CD8-positive, alpha-beta memory T cell (primary cell): ENCODE measurements at regions of chr20 and their contacts with region 1.

Region 1: DNA sequence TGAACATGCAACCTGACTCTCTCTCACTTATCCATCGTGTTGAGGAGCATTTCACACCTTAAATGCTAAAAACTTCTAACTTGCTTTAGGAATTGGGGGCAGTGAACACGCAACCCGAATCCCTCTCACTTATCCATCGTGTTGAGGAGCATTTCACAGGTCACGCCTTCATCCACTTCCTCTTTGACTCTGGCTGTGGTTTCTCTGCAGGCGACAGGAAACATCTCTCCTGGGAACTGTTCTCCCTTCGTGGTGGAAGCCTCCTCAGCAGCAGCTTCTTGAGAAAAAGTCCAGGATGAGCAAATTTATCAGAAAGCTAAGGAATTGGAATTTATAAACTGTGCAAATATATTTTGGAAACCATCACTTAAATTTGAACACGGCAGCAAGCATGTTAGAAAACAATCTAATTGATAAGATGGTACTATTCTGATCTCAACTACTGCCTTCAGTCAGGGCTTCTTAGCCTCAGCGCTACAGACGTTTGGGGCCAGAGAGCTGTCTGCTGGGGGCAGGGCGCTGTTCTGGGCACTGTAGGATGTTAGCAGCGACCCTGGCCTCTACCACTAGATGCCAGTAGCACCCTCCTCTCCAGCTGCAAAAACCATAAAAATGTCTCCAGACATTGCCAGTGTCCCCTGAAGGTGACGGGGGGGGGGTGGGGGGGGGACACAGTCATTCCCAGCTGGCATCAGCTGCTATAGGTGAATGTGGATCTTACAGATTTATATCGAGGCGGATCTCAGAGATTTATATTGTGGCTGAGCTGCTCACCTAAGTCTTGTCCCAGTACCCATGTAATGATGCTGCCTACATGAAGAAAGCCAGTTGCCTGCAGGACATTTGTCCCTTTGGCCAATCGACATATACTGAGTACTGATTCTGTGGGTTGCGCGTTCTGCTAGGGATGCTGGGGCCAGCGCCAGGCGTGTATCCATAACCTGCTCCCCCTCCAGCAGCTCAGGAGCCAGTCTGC is 26.2 kb downstream of the CTCFL start:
- DNase-seq: peak in 1 of 5 donors; percentile 26
- H3K4me3 ChIP-seq: no peak overlapping the region
- H3K4me3 Mint-ChIP-seq: no peak overlapping the region
- H3K27ac ChIP-seq: no peak overlapping the region
- H3K27ac Mint-ChIP-seq: peak overlapping the region in 1 of 8 donors; percentile 14
- H3K4me1 ChIP-seq: peaks cover 11% of the 10 kb centered on the region
- H3K4me1 Mint-ChIP-seq: peaks cover 8 to 14% (median 13%) of the 10 kb centered on the region in 3 donors
- H3K27me3 ChIP-seq: peaks cover 6% of the 10 kb centered on the region
- H3K27me3 Mint-ChIP-seq: peaks cover 32 to 60% of the 10 kb centered on the region in 2 donors

Region 2: GRCh38 chr20:57175397-57176010 is 323.2 kb before region 1 on chr20:
- CTCF ChIA-PET with region 1: no interaction called
- POLR2A ChIA-PET with region 1: no interaction called
- DNase-seq: no peak
- H3K4me3 ChIP-seq: no peak overlapping the region
- H3K4me3 Mint-ChIP-seq: no peak overlapping the region
- H3K27ac ChIP-seq: no peak overlapping the region
- H3K27ac Mint-ChIP-seq: no peak overlapping the region
- H3K4me1 ChIP-seq: no peaks in the 10 kb centered on the region
- H3K4me1 Mint-ChIP-seq: no peaks in the 10 kb centered on the region
- H3K27me3 ChIP-seq: no peaks in the 10 kb centered on the region
- H3K27me3 Mint-ChIP-seq: peaks cover 10 to 19% of the 10 kb centered on the region in 2 donors

Region 3: GRCh38 chr20:57382027-57382503 is 116.6 kb before region 1 on chr20:
- CTCF ChIA-PET with region 1: interaction called, 16 read pairs
- POLR2A ChIA-PET with region 1: no interaction called
- DNase-seq: no peak
- H3K4me3 ChIP-seq: no peak overlapping the region
- H3K4me3 Mint-ChIP-seq: peak overlapping the region in 1 of 7 donors; percentile 62
- H3K27ac ChIP-seq: no peak overlapping the region
- H3K27ac Mint-ChIP-seq: peak overlapping the region; percentile 31 to 83 (median 61)
- H3K4me1 ChIP-seq: peaks cover 11% of the 10 kb centered on the region
- H3K4me1 Mint-ChIP-seq: peaks cover 24 to 44% (median 38%) of the 10 kb centered on the region in 3 donors
- H3K27me3 ChIP-seq: no peaks in the 10 kb centered on the region
- H3K27me3 Mint-ChIP-seq: no peaks in the 10 kb centered on the region

Region 4: GRCh38 chr20:57450419-57450818 is 48.3 kb before region 1 on chr20:
- CTCF ChIA-PET with region 1: no interaction called
- POLR2A ChIA-PET with region 1: no interaction called
- DNase-seq: no peak
- H3K4me3 ChIP-seq: no peak overlapping the region
- H3K4me3 Mint-ChIP-seq: peak overlapping the region in 4 of 7 donors; percentile 41 to 71 (median 51)
- H3K27ac ChIP-seq: no peak overlapping the region
- H3K27ac Mint-ChIP-seq: peak overlapping the region in 7 of 8 donors; percentile 20 to 92 (median 45)
- H3K4me1 ChIP-seq: peaks cover 35% of the 10 kb centered on the region
- H3K4me1 Mint-ChIP-seq: peaks cover 30 to 33% (median 33%) of the 10 kb centered on the region in 3 donors
- H3K27me3 ChIP-seq: no peaks in the 10 kb centered on the region
- H3K27me3 Mint-ChIP-seq: peaks cover 0 to 4% of the 10 kb centered on the region in 2 donors

Region 5: DNA sequence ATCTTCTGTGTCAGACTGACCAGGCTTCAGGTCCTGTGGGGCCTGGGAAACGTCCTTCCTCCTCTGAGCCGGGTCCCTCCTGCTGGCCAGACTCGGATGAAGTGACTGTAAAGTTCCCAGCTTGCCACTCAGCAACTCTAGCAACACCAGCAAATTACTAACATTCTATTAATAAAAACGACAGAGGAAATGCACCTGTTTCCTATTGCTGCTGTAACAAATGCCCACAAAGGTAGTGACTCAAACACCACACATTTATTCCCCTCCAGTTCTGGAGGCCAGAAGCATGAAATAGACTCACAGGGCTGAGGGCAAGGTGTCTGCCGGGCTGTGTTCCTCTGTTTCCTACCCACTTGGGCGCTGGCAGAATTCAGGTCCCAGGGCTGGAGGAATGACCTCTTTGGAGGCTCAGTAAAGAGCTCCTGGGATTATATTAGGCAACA is 22.6 kb before region 1 on chr20:
- CTCF ChIA-PET with region 1: no interaction called
- POLR2A ChIA-PET with region 1: no interaction called
- DNase-seq: no peak
- H3K4me3 ChIP-seq: no peak overlapping the region
- H3K4me3 Mint-ChIP-seq: no peak overlapping the region
- H3K27ac ChIP-seq: no peak overlapping the region
- H3K27ac Mint-ChIP-seq: peak overlapping the region in 1 of 8 donors; percentile 43
- H3K4me1 ChIP-seq: peaks cover 34% of the 10 kb centered on the region
- H3K4me1 Mint-ChIP-seq: peaks cover 16 to 38% (median 19%) of the 10 kb centered on the region in 3 donors
- H3K27me3 ChIP-seq: no peaks in the 10 kb centered on the region
- H3K27me3 Mint-ChIP-seq: peaks cover 3 to 11% of the 10 kb centered on the region in 2 donors

Region 6: DNA sequence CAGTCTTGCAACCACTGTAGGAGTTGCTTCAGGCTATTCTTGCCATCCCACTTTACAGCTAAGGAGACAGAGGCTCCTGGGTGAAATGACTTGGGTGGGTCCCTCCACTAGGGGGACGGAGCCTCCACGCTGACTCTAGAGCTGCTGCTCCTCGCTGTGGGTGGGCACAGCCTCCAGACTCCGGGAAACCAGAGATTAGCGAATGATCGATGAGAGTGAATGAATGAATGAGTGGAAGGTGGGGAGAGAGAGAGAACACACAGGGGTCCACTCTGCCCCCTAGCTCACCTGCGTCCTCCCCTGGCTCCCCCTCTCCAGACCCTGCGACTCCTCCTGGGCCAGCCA is 111.1 kb after region 1 on chr20:
- CTCF ChIA-PET with region 1: no interaction called
- POLR2A ChIA-PET with region 1: no interaction called
- DNase-seq: no peak
- H3K4me3 ChIP-seq: no peak overlapping the region
- H3K4me3 Mint-ChIP-seq: no peak overlapping the region
- H3K27ac ChIP-seq: no peak overlapping the region
- H3K27ac Mint-ChIP-seq: peak overlapping the region in 4 of 8 donors; percentile 15 to 67 (median 50)
- H3K4me1 ChIP-seq: peaks cover 7% of the 10 kb centered on the region
- H3K4me1 Mint-ChIP-seq: peaks cover 13 to 25% (median 20%) of the 10 kb centered on the region in 3 donors
- H3K27me3 ChIP-seq: no peaks in the 10 kb centered on the region
- H3K27me3 Mint-ChIP-seq: no peaks in the 10 kb centered on the region